Vagina (tissue), 2 donors: ENCODE measurements at regions of chr17 and their contacts with region 1.

Region 1: GRCh38 chr17:49390548-49391324 is 23.9 kb downstream of the PHB1 start:
- DNase-seq: no peak
- H3K4me3 ChIP-seq: no peak overlapping the region
- H3K27ac ChIP-seq: peak overlapping the region; percentile 37
- H3K4me1 ChIP-seq: peaks cover 20% of the 10 kb centered on the region
- H3K27me3 ChIP-seq: no peaks in the 10 kb centered on the region
- CTCF ChIP-seq: no peak
- POLR2A ChIP-seq: no peak

Region 2: DNA sequence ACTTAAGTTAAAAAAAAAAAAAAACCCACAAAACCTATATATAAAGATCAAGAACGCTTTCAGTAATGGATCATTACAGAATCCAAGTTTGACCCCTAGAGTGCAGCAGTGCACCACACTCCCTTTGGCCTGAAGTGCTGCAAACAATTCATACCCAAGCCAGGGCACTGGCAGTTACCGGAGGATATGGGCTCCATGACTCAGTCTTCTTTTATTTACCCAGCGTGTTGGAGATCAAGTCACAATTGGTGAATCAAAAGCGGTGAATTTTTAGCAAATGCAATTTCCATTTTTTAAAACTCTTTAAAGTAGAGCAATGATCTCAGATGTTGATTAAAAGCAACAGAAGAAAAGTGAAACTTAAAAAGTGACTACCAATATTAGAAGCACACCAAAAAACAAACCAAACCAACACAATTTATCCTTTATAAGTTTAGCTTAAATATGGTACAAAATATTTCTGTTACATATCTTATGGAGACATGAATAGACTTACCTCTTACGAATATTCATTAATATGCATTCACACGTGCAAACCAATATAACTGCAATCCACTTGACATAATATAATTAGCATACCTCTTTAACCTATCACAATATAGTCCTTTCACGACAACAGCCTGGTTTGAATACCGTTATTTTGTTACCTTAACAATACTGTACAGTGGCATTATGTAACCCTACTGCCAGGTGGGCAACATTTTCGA is 75.0 kb before region 1 on chr17:
- intact Hi-C with region 1: loop called (anchors 10 kb)
- DNase-seq: no peak
- H3K4me3 ChIP-seq: no peak overlapping the region
- H3K27ac ChIP-seq: no peak overlapping the region
- H3K4me1 ChIP-seq: peaks cover 10% of the 10 kb centered on the region
- H3K27me3 ChIP-seq: no peaks in the 10 kb centered on the region
- CTCF ChIP-seq: peak; percentile 57 to 73 (median 64)
- POLR2A ChIP-seq: no peak

Region 3: GRCh38 chr17:49379926-49380325 is 10.8 kb before region 1 on chr17:
- intact Hi-C with region 1: no loop called
- DNase-seq: no peak
- H3K4me3 ChIP-seq: no peak overlapping the region
- H3K27ac ChIP-seq: no peak overlapping the region
- H3K4me1 ChIP-seq: no peaks in the 10 kb centered on the region
- H3K27me3 ChIP-seq: no peaks in the 10 kb centered on the region
- CTCF ChIP-seq: no peak
- POLR2A ChIP-seq: no peak